ENCODE measurements at regions of chr2 and their contacts with region 1.

Region 1: DNA sequence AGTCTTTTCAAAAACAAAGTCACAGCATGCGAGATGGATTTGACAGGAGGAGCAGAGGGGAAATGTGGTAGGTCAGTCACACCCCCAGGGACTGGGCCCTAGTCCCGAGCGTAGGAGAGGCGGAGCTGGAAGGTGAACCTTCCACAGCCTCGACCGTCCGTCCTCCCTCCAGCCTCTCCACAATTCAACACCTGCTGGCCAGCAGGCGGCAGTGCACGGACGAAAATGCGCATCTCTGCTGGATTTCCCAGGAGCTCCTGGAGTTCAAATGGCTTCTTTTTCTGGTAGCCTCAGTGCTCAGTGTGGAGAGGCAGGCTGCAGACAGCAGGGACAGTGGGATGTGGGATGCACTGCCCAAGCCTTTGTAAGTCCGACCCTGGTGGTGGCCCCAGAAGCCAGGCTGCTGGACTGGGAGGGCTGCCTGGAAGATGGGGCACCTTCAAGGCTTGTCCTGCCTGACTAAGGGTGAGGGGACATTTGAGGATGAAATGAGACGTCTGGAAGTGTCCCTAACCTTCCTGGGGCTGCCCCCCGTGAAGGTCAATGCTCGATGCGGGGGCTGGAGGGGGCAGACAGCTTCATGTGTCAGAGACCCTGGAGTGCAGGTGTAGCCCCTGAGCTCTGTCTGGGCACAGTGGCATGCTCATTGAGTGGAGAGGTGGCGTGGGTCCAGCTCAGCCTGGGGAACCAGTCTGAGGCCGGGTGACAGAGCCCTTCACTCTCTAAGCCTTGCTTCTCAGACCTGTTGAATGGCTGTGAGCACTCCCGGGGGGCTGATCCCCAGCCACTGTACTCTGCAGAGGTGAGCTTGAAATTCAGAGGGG is 189.5 kb downstream of the TFCP2L1 start:
- DNase-seq: peak; percentile 53
- ATAC-seq: peak; percentile 94
- H3K4me3 ChIP-seq: no peak overlapping the region
- H3K27ac ChIP-seq: no peak overlapping the region
- H3K4me1 ChIP-seq: no peaks in the 10 kb centered on the region
- H3K27me3 ChIP-seq: peaks cover 11 to 43% of the 10 kb centered on the region in 2 experiments; a peak in 3 of 5 replicates
- CTCF ChIP-seq: peak; percentile 96
- EP300 ChIP-seq: no peak
- POLR2A ChIP-seq: no peak
- RAD21 ChIP-seq: peak; percentile 78

Region 2: DNA sequence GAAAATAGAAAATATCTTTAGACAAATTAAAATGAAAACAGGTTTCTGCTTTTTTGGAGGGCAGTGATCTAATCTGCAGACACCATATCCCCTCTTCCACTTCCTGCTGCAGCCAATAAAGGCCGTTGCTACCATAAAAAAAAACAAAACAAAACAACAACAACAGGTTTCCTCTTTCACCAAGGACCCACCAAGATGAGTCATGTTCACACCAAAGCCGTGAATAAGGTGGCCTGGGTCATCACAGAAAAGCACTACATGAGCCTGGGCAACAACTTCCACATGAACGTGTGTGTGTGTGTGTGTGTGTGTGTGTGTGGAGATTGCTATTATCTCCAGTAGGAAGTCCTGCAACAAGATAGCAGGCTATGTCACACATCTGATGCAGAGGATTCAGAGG is 214.3 kb after region 1 on chr2:
- CTCF ChIA-PET with region 1: no interaction called
- POLR2A ChIA-PET with region 1: no interaction called
- in situ Hi-C with region 1: no loop called
- intact Hi-C with region 1: no loop called
- DNase-seq: no peak
- ATAC-seq: no peak
- H3K4me3 ChIP-seq: no peak overlapping the region
- H3K27ac ChIP-seq: no peak overlapping the region
- H3K4me1 ChIP-seq: no peaks in the 10 kb centered on the region
- H3K27me3 ChIP-seq: no peaks in the 10 kb centered on the region
- CTCF ChIP-seq: no peak
- EP300 ChIP-seq: no peak
- POLR2A ChIP-seq: no peak
- RAD21 ChIP-seq: no peak

Region 3: DNA sequence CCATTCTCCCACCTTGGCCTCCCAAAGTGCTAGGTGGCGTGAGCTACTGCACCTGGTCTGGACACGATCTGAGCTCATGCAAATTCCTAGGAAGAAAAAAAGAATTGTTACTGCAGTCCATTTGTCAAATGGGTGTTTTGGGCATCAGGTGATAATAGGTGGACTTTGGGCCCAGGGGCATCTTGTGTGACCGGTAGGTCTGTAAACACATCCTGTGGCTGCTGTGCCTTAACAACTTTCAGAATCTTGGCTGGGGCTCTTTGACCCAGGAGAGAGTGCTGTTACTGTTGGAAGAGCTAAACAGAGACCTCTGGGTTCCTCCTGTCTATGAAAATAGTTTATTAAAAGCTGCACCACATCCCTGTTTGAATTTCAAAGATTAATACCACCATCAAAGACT is 224.5 kb after region 1 on chr2:
- CTCF ChIA-PET with region 1: interaction called, 3 read pairs
- POLR2A ChIA-PET with region 1: no interaction called
- in situ Hi-C with region 1: loop called (anchors 10 kb)
- intact Hi-C with region 1: loop called (anchors 1 kb)
- DNase-seq: no peak
- ATAC-seq: no peak
- H3K4me3 ChIP-seq: no peak overlapping the region
- H3K27ac ChIP-seq: no peak overlapping the region
- H3K4me1 ChIP-seq: peaks cover 12% of the 10 kb centered on the region; the same call in 1 of the 2 replicates
- H3K27me3 ChIP-seq: peaks cover 0 to 2% of the 10 kb centered on the region in 2 experiments; a peak in 1 of 5 replicates
- CTCF ChIP-seq: no peak
- EP300 ChIP-seq: no peak
- POLR2A ChIP-seq: no peak
- RAD21 ChIP-seq: no peak

Region 4: DNA sequence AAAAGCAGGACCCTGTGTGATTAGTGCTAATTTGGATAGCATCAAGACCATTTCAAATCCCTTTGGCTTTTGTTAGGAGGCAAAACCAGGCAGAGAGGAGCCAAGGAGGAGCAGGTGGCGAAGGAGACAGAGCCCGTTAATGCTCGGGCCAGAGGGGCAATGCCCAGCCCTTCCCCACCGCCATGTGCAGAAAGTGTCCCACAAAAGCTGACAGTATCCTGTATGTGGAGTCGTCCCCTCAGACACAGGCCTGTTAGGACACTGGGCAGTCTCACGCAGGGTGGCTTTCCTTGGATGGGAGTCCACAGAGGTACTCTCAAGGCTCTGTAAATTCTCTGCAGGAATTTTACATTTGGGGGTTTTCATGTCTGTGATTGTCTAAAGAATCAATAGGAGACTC is 234.3 kb after region 1 on chr2:
- CTCF ChIA-PET with region 1: no interaction called
- POLR2A ChIA-PET with region 1: no interaction called
- in situ Hi-C with region 1: loop called (anchors 10 kb)
- intact Hi-C with region 1: no loop called
- DNase-seq: no peak
- ATAC-seq: no peak
- H3K4me3 ChIP-seq: no peak overlapping the region
- H3K27ac ChIP-seq: no peak overlapping the region
- H3K4me1 ChIP-seq: peaks cover 16% of the 10 kb centered on the region
- H3K27me3 ChIP-seq: peaks cover 0 to 7% of the 10 kb centered on the region in 2 experiments; a peak in 1 of 5 replicates
- CTCF ChIP-seq: no peak
- EP300 ChIP-seq: no peak
- POLR2A ChIP-seq: no peak
- RAD21 ChIP-seq: no peak

Region 5: GRCh38 chr2:121356058-121356640 is 260.7 kb after region 1 on chr2:
- CTCF ChIA-PET with region 1: interaction called, 7 read pairs
- POLR2A ChIA-PET with region 1: no interaction called
- in situ Hi-C with region 1: loop called (anchors 10 kb)
- intact Hi-C with region 1: loop called (anchors 1 kb)
- DNase-seq: peak; percentile 55
- ATAC-seq: peak; percentile 78
- H3K4me3 ChIP-seq: no peak overlapping the region
- H3K27ac ChIP-seq: peak overlapping the region; percentile 2
- H3K4me1 ChIP-seq: peaks cover 12% of the 10 kb centered on the region
- H3K27me3 ChIP-seq: no peaks in the 10 kb centered on the region
- CTCF ChIP-seq: peak; percentile 81
- EP300 ChIP-seq: no peak
- POLR2A ChIP-seq: no peak
- RAD21 ChIP-seq: peak; percentile 39; the same call in 1 of the 2 replicates